HepG2 (cell line): ENCODE measurements at regions of chr11 and their contacts with region 1.

Region 1: GRCh38 chr11:82867495-82868082 is 32.6 kb downstream of the PRCP start:
- DNase-seq: peak; percentile 75
- ATAC-seq: peak; percentile 68
- H3K4me3 ChIP-seq: no peak overlapping the region
- H3K27ac ChIP-seq: no peak overlapping the region
- H3K4me1 ChIP-seq: 0 out of 2 replicates have a peak, but pooled peaks cover 14% of the 10 kb centered on the region
- H3K27me3 ChIP-seq: no peaks in the 10 kb centered on the region
- CTCF ChIP-seq: peak; percentile 76
- EP300 ChIP-seq: no peak
- POLR2A ChIP-seq: no peak
- RAD21 ChIP-seq: peak; percentile 40; the same call in 1 of the 2 replicates

Region 2: DNA sequence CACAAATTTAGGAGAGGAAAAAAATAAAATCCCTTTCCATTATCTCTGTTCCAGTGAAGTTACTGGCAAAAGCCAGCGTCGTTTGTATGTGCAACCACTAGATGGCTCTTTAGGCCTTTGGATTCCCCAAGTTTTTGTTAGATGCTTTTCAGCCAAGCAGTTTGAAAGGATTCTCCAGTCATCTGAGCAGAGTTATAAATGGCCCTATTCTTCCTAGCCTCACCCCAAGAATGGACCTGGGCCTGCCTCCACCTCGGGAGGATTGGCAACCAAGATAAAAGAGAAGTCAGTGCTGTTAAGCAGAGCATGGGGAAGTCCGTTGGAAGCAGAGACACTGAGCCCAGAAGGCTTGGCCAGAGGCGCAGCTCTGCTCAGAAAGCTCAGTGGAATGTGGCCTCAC is 149.3 kb before region 1 on chr11:
- CTCF ChIA-PET with region 1: interaction called, 21 read pairs
- POLR2A ChIA-PET with region 1: no interaction called
- in situ Hi-C with region 1: no loop called
- intact Hi-C with region 1: loop called (anchors 1 kb)
- DNase-seq: peak; percentile 7
- ATAC-seq: peak; percentile 72
- H3K4me3 ChIP-seq: no peak overlapping the region
- H3K27ac ChIP-seq: no peak overlapping the region
- H3K4me1 ChIP-seq: no peaks in the 10 kb centered on the region
- H3K27me3 ChIP-seq: peaks cover 0 to 18% of the 10 kb centered on the region in 2 experiments; a peak in 3 of 5 replicates
- CTCF ChIP-seq: peak; percentile 74
- EP300 ChIP-seq: no peak
- POLR2A ChIP-seq: no peak
- RAD21 ChIP-seq: no peak

Region 3: DNA sequence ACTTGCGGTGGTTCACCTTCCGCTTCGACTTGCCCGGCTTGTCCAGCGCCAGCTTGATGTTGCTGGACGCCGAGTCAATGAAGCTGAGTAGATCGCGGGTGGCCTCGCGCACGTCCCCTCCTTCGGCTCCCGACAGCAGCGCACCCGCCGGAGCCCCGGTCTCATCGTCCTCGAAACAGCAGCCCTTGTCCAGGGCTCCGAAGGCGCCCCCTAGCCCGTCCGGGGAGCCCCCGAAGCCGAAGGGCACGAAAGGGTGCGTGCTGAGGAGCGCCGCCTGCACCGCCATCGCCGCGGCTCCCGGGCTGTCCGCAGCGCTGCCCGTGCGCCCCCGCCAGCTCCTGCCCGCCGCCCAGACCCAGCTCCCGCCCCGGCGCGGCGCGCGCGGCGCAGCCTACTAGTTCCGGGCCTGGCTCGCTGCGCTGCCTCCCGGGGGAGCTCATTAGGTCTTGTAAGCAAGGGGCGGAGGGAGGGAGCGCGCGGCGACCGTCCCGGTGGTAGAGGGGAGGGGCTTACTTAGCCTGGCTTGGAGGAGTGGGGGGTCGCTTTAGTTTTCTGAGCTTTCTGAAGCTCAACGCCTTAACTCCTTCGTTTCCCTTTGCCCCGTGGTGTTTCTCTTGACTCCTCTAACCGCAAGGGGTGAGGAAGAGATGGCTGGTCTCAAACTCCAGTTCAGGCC is 134.0 kb before region 1 on chr11 and contains the start of gene FAM181B:
- CTCF ChIA-PET with region 1: no interaction called
- POLR2A ChIA-PET with region 1: no interaction called
- in situ Hi-C with region 1: loop called (anchors 5 kb)
- intact Hi-C with region 1: no loop called
- DNase-seq: no peak
- ATAC-seq: peak; percentile 93
- H3K4me3 ChIP-seq: peak within 1 kb of the TSS; percentile 37 to 67 (median 55); a peak in 5 of 6 replicates
- H3K27ac ChIP-seq: no peak within 1 kb of the TSS
- H3K4me1 ChIP-seq: peaks cover 5% of the 10 kb centered on the region; the same call in 1 of the 2 replicates
- H3K27me3 ChIP-seq: peaks cover 7 to 43% of the 10 kb centered on the region in 2 experiments; a peak in 4 of 5 replicates
- CTCF ChIP-seq: peak; percentile 30; the same call in 1 of the 2 replicates
- EP300 ChIP-seq: no peak
- POLR2A ChIP-seq: no peak
- RAD21 ChIP-seq: no peak
- total RNA-seq, gene FAM181B: not detected in 2 replicates

Region 4: GRCh38 chr11:82775736-82776346 is 91.7 kb before region 1 on chr11:
- CTCF ChIA-PET with region 1: interaction called, 21 read pairs
- POLR2A ChIA-PET with region 1: no interaction called
- in situ Hi-C with region 1: loop called (anchors 10 kb)
- intact Hi-C with region 1: loop called (anchors 1 kb)
- DNase-seq: peak; percentile 42
- ATAC-seq: peak; percentile 100
- H3K4me3 ChIP-seq: no peak overlapping the region
- H3K27ac ChIP-seq: no peak overlapping the region
- H3K4me1 ChIP-seq: peaks cover 9% of the 10 kb centered on the region
- H3K27me3 ChIP-seq: no peaks in the 10 kb centered on the region
- CTCF ChIP-seq: peak; percentile 82
- EP300 ChIP-seq: no peak
- POLR2A ChIP-seq: no peak
- RAD21 ChIP-seq: peak; percentile 69

Region 5: GRCh38 chr11:82906244-82906654 is 38.7 kb after region 1 on chr11:
- CTCF ChIA-PET with region 1: no interaction called
- POLR2A ChIA-PET with region 1: no interaction called
- in situ Hi-C with region 1: no loop called
- intact Hi-C with region 1: no loop called
- DNase-seq: peak; percentile 26
- ATAC-seq: no peak
- H3K4me3 ChIP-seq: no peak overlapping the region
- H3K27ac ChIP-seq: no peak overlapping the region
- H3K4me1 ChIP-seq: peaks cover 32% of the 10 kb centered on the region
- H3K27me3 ChIP-seq: no peaks in the 10 kb centered on the region
- CTCF ChIP-seq: peak; percentile 51
- EP300 ChIP-seq: no peak
- POLR2A ChIP-seq: no peak
- RAD21 ChIP-seq: peak; percentile 32; the same call in 1 of the 2 replicates

Region 6: GRCh38 chr11:84501750-84502149 is 1634.2 kb after region 1 on chr11:
- CTCF ChIA-PET with region 1: no interaction called
- POLR2A ChIA-PET with region 1: no interaction called
- in situ Hi-C with region 1: no loop called
- intact Hi-C with region 1: no loop called
- DNase-seq: no peak
- ATAC-seq: no peak
- H3K4me3 ChIP-seq: no peak overlapping the region
- H3K27ac ChIP-seq: no peak overlapping the region
- H3K4me1 ChIP-seq: no peaks in the 10 kb centered on the region
- H3K27me3 ChIP-seq: no peaks in the 10 kb centered on the region
- CTCF ChIP-seq: no peak
- EP300 ChIP-seq: no peak
- POLR2A ChIP-seq: no peak
- RAD21 ChIP-seq: no peak